Heart right ventricle (tissue), 16 donors: ENCODE measurements at regions of chr20 and their contacts with region 1.

Region 1: GRCh38 chr20:51385646-51386530 is 156.6 kb downstream of the NFATC2 start:
- DNase-seq: no peak
- ATAC-seq: peak in 5 of 8 donors; percentile 42 to 73 (median 55)
- H3K4me3 ChIP-seq: no peak overlapping the region
- H3K27ac ChIP-seq: no peak overlapping the region
- H3K4me1 ChIP-seq: peaks cover 0 to 38% (median 22%) of the 10 kb centered on the region in 9 donors
- H3K27me3 ChIP-seq: no peaks in the 10 kb centered on the region
- CTCF ChIP-seq: peak; percentile 15 to 68 (median 61)

Region 2: GRCh38 chr20:51184289-51184688 is 201.6 kb before region 1 on chr20:
- intact Hi-C with region 1: no loop called
- DNase-seq: no peak
- ATAC-seq: no peak
- H3K4me3 ChIP-seq: no peak overlapping the region
- H3K27ac ChIP-seq: no peak overlapping the region
- H3K4me1 ChIP-seq: no peaks in the 10 kb centered on the region
- H3K27me3 ChIP-seq: peaks cover 0 to 47% (median 26%) of the 10 kb centered on the region in 7 donors
- CTCF ChIP-seq: no peak

Region 3: GRCh38 chr20:51492167-51493092 is 106.5 kb after region 1 on chr20:
- intact Hi-C with region 1: loop called in 3 of 10 experiments (anchors 1 to 10 kb)
- DNase-seq: peak; percentile 68 to 82
- ATAC-seq: peak; percentile 67 to 92 (median 86)
- H3K4me3 ChIP-seq: peak overlapping the region in 9 of 10 donors; percentile 23 to 50 (median 39)
- H3K27ac ChIP-seq: peak overlapping the region in 8 of 10 donors; percentile 1 to 55 (median 40)
- H3K4me1 ChIP-seq: peaks cover 9 to 56% (median 25%) of the 10 kb centered on the region in 9 donors
- H3K27me3 ChIP-seq: peaks cover 0 to 11% (median 0%) of the 10 kb centered on the region in 7 donors
- CTCF ChIP-seq: no peak

Region 4: GRCh38 chr20:51541189-51542032 is 155.5 kb after region 1 on chr20:
- intact Hi-C with region 1: loop called in 4 of 10 experiments (anchors 2 to 5 kb)
- DNase-seq: peak; percentile 67 to 92
- ATAC-seq: peak; percentile 87 to 96 (median 92)
- H3K4me3 ChIP-seq: peak overlapping the region in 9 of 10 donors; percentile 34 to 61 (median 50)
- H3K27ac ChIP-seq: peak overlapping the region; percentile 51 to 92 (median 80)
- H3K4me1 ChIP-seq: peaks cover 16 to 45% (median 35%) of the 10 kb centered on the region in 9 donors
- H3K27me3 ChIP-seq: peaks cover 0 to 35% (median 0%) of the 10 kb centered on the region in 7 donors
- CTCF ChIP-seq: peak in 1 of 9 donors; percentile 19

Region 5: DNA sequence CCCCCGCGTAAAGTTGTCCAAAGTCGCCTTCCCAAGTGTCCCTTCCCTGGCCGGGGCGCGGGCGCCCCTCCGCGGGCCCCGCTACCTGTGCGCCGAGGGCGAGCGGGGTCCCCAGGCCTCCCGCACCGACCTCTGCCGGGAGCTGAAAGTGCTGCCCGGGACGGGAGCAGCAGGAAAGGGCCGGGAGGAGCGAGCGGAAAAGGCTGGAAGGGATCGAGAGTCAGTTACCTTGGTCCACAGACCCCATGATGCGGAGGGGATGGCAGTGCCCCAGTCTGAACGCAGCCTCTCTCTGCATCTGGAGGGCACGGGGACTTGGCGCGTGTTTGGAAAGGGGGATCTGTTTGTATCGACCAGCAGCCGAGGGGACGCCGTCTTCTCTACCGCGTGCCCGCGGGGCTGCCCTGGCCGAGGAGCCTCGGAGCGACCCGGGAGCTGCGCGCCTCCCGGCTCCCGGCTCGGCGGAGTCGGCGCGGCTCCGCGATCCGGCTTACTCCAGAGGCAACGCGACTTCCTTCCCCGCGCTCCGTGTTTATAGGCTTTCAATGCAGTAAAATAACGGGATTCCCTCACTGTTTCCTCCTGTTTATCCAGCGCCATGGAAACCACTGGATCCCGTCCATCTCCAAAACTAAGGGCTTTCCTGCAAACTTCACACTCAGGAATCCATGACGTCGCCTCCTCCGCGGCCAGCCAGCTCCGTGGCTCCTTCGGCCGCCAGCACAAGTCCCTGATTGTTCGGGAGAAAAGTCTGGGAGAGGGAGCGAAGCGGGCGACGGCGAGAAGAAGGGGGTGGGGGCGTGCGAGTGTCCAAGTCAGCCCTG is 176.7 kb after region 1 on chr20:
- intact Hi-C with region 1: loop called in 1 of 10 experiments (anchors 10 kb)
- DNase-seq: peak; percentile 79 to 94
- ATAC-seq: peak; percentile 75 to 91 (median 84)
- H3K4me3 ChIP-seq: peak overlapping the region; percentile 19 to 72 (median 59)
- H3K27ac ChIP-seq: peak overlapping the region; percentile 66 to 96 (median 86)
- H3K4me1 ChIP-seq: peaks cover 8 to 63% (median 45%) of the 10 kb centered on the region in 9 donors
- H3K27me3 ChIP-seq: peaks cover 0 to 69% (median 0%) of the 10 kb centered on the region in 7 donors
- CTCF ChIP-seq: peak in 7 of 9 donors; percentile 15 to 64 (median 39)

Region 6: DNA sequence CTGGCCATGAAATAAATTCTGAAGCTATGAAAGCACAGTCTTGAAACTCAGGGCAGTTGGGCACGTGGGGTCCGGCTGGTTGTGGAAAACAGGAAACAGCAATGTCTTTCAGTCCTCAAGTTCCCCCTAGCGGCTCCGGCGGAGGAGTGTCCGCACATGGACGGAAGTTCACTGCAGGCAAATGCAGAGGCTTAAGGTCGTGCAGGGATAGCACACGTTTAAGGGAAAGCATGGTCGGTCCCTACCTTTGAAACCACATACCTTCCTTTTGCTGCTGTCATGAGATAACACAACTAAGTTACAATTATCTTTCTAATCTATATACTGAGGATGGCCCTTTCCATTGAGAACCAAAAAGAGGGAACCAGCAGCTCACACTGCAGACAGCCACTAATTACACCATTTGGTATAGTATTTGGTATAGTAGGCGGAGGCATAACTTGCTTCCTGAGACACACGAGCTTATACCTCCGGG is 209.2 kb after region 1 on chr20:
- intact Hi-C with region 1: loop called in 8 of 10 experiments (anchors 2 to 5 kb)
- DNase-seq: peak; percentile 83 to 90
- ATAC-seq: peak; percentile 93 to 99 (median 98)
- H3K4me3 ChIP-seq: no peak overlapping the region
- H3K27ac ChIP-seq: peak overlapping the region in 1 of 10 donors; percentile 20
- H3K4me1 ChIP-seq: peaks cover 0 to 15% (median 9%) of the 10 kb centered on the region in 9 donors
- H3K27me3 ChIP-seq: no peaks in the 10 kb centered on the region
- CTCF ChIP-seq: peak; percentile 71 to 93 (median 90)